HCT116 (cell line): ENCODE measurements at regions of chr1 and their contacts with region 1.

Region 1: DNA sequence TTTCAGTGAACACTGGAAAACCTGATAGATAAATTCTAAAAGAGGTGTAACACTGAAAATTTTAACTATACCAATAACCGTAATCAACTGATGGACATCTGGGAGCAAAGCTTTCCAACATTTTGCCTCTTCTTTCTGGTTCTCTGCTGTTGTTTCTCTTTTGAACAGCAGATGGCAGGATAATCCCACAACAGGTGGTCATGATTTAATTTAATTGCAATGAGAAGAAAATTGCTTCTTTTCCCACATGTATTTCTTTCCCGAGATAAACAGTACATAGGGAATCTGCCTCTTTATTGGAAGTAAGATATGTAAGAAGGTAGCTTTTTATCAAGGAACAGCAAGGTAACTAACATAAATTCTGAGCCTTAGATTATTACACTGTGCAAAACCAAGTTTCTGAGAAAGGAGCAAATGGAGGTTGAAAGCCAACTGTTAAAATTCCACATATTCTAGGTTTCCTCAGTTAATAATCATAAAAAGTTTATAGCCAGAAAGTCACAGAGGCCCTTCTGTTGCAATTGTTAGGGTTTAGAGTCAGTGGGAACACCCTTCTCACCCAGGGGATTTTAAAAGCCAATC is 72.9 kb downstream of the RPS6KA1 start:
- DNase-seq: peak; percentile 51
- ATAC-seq: 0 out of 2 replicates have a peak, but pooled peaks have one; percentile 38
- H3K4me3 ChIP-seq: no peak overlapping the region
- H3K27ac ChIP-seq: no peak overlapping the region
- H3K4me1 ChIP-seq: peaks cover 0 to 10% of the 10 kb centered on the region in 2 experiments; a peak in 3 of 4 replicates
- H3K27me3 ChIP-seq: no peaks in the 10 kb centered on the region; the same call in 1 of the 2 replicates
- CTCF ChIP-seq: peak; percentile 77 to 95 (median 92)
- POLR2A ChIP-seq: no peak
- RAD21 ChIP-seq: peak; percentile 99

Region 2: DNA sequence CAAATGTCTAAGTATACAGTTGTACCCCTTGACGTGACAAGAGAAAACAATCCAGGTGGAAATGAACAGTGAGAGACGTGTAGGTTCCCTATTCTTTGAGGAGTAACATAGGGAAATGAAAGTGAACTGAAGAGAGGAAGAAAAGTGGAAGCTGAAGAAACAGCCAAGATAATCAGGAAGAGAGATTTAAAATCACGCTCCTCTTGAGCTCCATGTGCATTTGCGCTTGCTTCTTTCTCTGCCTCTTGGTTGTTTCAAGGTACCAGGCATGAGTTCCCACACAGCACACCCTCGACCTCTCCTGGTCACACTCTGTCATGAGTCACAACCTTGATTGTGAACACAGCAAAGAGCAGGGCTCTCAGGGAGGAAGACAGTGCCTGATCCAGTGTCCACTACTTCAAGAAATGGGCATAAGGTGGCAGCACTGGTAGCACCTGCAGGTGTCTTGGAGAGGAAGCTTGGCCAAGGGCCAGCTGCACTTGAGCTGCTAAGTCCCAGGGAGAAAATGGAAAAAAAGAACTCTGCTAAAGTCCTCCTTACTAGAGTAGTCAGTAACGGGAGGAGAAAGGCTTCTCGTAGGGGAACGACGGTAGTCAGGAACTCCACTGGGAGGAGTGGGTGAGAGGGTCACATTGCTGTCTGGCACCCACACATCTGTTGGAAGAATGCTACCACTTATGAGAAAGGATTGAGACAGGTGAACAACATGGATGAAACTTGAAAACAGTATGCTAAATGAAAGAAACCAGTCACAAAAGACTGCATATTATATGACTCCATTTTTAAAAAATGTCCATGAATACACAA is 75.0 kb after region 1 on chr1:
- CTCF ChIA-PET with region 1: interaction called, 18 read pairs
- POLR2A ChIA-PET with region 1: no interaction called
- RAD21 ChIA-PET with region 1: interaction called, 4 to 5 read pairs
- intact Hi-C with region 1: no loop called
- DNase-seq: peak; percentile 94
- ATAC-seq: peak; percentile 100
- H3K4me3 ChIP-seq: peak overlapping the region in 1 of 2 experiments; percentile 24; a peak in 2 of 4 replicates
- H3K27ac ChIP-seq: no peak overlapping the region
- H3K4me1 ChIP-seq: peaks cover 0 to 13% of the 10 kb centered on the region in 2 experiments; a peak in 2 of 4 replicates
- H3K27me3 ChIP-seq: no peaks in the 10 kb centered on the region
- CTCF ChIP-seq: peak; percentile 83 to 97 (median 86)
- POLR2A ChIP-seq: no peak
- RAD21 ChIP-seq: peak; percentile 91

Region 3: GRCh38 chr1:26695356-26696118 is 93.1 kb after region 1 on chr1 and contains the start of gene ARID1A:
- CTCF ChIA-PET with region 1: interaction called, 11 read pairs
- POLR2A ChIA-PET with region 1: interaction called, 6 read pairs
- RAD21 ChIA-PET with region 1: no interaction called
- intact Hi-C with region 1: no loop called
- DNase-seq: peak; percentile 92
- ATAC-seq: peak; percentile 51
- H3K4me3 ChIP-seq: peak within 1 kb of the TSS; percentile 60 to 64
- H3K27ac ChIP-seq: peak within 1 kb of the TSS; percentile 94
- H3K4me1 ChIP-seq: peaks cover 27 to 76% of the 10 kb centered on the region in 2 experiments
- H3K27me3 ChIP-seq: no peaks in the 10 kb centered on the region
- CTCF ChIP-seq: no peak
- POLR2A ChIP-seq: no peak
- RAD21 ChIP-seq: no peak
- total RNA-seq, gene ARID1A: 62.8 TPM

Region 4: DNA sequence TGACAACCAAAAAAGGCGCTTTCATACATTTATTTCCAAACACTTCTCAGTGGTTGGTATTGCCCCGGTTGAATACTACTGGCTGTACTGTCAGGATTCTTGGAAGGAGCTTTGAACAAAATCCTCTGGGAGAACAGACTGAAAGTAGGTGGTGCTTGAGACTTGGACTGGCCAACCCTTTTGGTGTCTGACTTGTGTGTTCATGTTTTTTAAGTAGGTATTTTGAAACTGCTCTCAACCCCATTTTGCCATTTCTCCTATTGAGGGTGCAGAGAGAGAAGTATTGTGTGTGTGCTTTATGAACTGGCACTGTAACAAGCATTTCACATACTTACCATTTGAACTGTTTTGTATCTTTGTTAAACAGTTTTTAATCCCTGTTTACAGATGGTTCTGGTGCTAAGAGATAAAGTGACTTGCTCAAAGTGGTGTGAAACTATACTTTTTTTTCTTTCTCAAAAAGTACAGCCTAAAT is 114.6 kb after region 1 on chr1:
- CTCF ChIA-PET with region 1: no interaction called
- POLR2A ChIA-PET with region 1: no interaction called
- RAD21 ChIA-PET with region 1: no interaction called
- intact Hi-C with region 1: loop called (anchors 5 kb)
- DNase-seq: no peak
- ATAC-seq: no peak
- H3K4me3 ChIP-seq: no peak overlapping the region
- H3K27ac ChIP-seq: no peak overlapping the region
- H3K4me1 ChIP-seq: peaks cover 0 to 11% of the 10 kb centered on the region in 2 experiments; a peak in 1 of 4 replicates
- H3K27me3 ChIP-seq: no peaks in the 10 kb centered on the region
- CTCF ChIP-seq: no peak
- POLR2A ChIP-seq: no peak
- RAD21 ChIP-seq: no peak

Region 5: DNA sequence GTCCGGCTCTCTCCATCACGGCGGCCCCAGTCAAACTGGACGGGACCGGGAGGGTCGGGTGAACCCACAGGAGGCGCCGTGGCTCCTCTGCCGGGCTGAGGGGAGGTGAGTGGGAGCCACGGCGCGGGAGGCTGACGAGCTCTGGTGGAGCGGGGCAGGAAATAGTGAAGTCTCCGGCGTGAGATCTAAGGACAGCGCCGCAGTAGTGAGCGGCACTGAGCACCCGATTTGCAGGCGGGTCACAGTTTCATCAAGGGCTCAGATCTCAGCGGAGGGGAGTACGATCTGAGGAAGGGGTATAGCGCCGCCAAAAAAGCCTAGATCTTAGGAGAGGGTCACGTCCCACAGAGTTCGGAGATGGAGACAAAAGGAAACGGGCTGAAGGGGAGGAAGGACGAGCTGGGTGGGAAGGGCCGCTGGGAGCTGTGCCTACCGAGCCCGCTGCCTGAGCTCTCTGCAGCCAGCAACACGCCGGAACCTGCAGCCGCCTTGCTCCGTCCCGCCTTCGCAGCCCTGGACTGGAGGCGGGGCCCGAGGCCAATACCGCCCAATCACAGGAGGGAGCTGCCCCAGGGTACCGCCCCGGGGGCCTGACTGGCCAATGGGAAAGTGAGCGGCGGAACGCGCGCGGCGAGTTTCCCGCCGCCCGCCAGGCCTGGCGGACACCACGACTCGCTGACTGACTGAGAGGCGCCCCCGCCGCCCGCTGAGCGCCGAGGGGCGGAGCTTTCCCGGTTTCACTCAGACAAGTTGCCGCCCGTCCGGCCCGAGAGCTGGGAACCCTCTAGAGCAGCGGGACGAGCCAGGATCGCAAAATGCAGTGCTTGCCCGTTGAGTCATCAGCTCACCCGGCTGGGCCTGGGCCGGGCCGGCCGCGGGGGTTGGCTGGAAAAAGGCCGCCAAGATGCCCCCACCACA is 262.4 kb after region 1 on chr1:
- CTCF ChIA-PET with region 1: interaction called, 9 read pairs
- POLR2A ChIA-PET with region 1: interaction called, 3 read pairs
- RAD21 ChIA-PET with region 1: interaction called in 1 of 2 experiments, 3 read pairs
- intact Hi-C with region 1: loop called (anchors 5 kb)
- DNase-seq: peak; percentile 95
- ATAC-seq: peak; percentile 72
- H3K4me3 ChIP-seq: peak overlapping the region; percentile 88 to 96
- H3K27ac ChIP-seq: peak overlapping the region; percentile 100
- H3K4me1 ChIP-seq: peaks cover 42 to 62% of the 10 kb centered on the region in 2 experiments
- H3K27me3 ChIP-seq: no peaks in the 10 kb centered on the region
- CTCF ChIP-seq: no peak
- POLR2A ChIP-seq: peak; percentile 95
- RAD21 ChIP-seq: no peak

Region 6: GRCh38 chr1:26874896-26875295 is 272.4 kb after region 1 on chr1:
- CTCF ChIA-PET with region 1: interaction called, 11 read pairs
- POLR2A ChIA-PET with region 1: no interaction called
- RAD21 ChIA-PET with region 1: no interaction called
- intact Hi-C with region 1: loop called (anchors 2 kb)
- DNase-seq: no peak
- ATAC-seq: no peak
- H3K4me3 ChIP-seq: no peak overlapping the region
- H3K27ac ChIP-seq: no peak overlapping the region
- H3K4me1 ChIP-seq: peaks cover 9 to 63% of the 10 kb centered on the region in 2 experiments
- H3K27me3 ChIP-seq: no peaks in the 10 kb centered on the region
- CTCF ChIP-seq: no peak
- POLR2A ChIP-seq: no peak
- RAD21 ChIP-seq: no peak

Region 7: DNA sequence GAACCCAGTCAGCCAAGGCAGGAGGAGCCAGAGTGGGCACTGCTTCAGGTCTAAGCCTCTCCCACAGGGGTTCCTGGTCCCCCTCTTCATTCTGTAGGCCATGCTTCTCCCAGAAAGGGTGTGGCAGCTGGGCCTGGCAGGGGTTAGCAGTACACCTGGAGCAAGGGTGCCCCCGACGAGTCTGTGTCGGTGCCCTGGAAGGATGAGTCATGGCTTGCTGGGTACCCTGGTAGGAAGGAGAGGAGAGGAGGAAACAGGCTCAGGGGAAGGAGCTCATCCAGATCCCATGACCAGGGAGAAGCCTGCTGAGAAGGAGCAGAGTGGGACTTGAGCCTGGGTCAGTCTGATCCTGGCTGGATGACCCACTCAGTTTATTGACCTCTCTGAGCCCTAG is 347.5 kb after region 1 on chr1:
- CTCF ChIA-PET with region 1: no interaction called
- POLR2A ChIA-PET with region 1: no interaction called
- RAD21 ChIA-PET with region 1: no interaction called
- intact Hi-C with region 1: no loop called
- DNase-seq: no peak
- ATAC-seq: peak; percentile 49
- H3K4me3 ChIP-seq: no peak overlapping the region
- H3K27ac ChIP-seq: peak overlapping the region; percentile 2
- H3K4me1 ChIP-seq: peaks cover 9 to 20% of the 10 kb centered on the region in 2 experiments
- H3K27me3 ChIP-seq: no peaks in the 10 kb centered on the region
- CTCF ChIP-seq: no peak
- POLR2A ChIP-seq: no peak
- RAD21 ChIP-seq: no peak

Region 8: GRCh38 chr1:27031235-27032118 is 429.0 kb after region 1 on chr1:
- CTCF ChIA-PET with region 1: no interaction called
- POLR2A ChIA-PET with region 1: no interaction called
- RAD21 ChIA-PET with region 1: no interaction called
- intact Hi-C with region 1: no loop called
- DNase-seq: peak; percentile 67
- ATAC-seq: peak; percentile 79
- H3K4me3 ChIP-seq: peak overlapping the region; percentile 37 to 54
- H3K27ac ChIP-seq: peak overlapping the region; percentile 86
- H3K4me1 ChIP-seq: peaks cover 35 to 46% of the 10 kb centered on the region in 2 experiments
- H3K27me3 ChIP-seq: no peaks in the 10 kb centered on the region
- CTCF ChIP-seq: no peak
- POLR2A ChIP-seq: no peak
- RAD21 ChIP-seq: no peak; the same call in 1 of the 2 replicates